Activated T-helper 1 cell treated with anti-CD3 and anti-CD28 coated beads, Interleukin-12 subunit alpha, Interleukin-12 subunit beta, Interleukin-2, Interleukin-4 antibody, amounts not matched to agents 30 ng/mL and 10 ng/mL and 1 ng/mL, durations not matched to agents 14 hours and 24 hours and 36 hours (primary cell): ENCODE measurements at regions of chr1 and their contacts with region 1.

Region 1: GRCh38 chr1:28208818-28209441 is 23.9 kb downstream of the DNAJC8 start:
- DNase-seq: peak; percentile 49
- H3K4me3 Mint-ChIP-seq: no peak overlapping the region
- H3K27ac Mint-ChIP-seq: no peak overlapping the region
- H3K4me1 Mint-ChIP-seq: peaks cover 19% of the 10 kb centered on the region
- H3K27me3 Mint-ChIP-seq: no peaks in the 10 kb centered on the region

Region 2: DNA sequence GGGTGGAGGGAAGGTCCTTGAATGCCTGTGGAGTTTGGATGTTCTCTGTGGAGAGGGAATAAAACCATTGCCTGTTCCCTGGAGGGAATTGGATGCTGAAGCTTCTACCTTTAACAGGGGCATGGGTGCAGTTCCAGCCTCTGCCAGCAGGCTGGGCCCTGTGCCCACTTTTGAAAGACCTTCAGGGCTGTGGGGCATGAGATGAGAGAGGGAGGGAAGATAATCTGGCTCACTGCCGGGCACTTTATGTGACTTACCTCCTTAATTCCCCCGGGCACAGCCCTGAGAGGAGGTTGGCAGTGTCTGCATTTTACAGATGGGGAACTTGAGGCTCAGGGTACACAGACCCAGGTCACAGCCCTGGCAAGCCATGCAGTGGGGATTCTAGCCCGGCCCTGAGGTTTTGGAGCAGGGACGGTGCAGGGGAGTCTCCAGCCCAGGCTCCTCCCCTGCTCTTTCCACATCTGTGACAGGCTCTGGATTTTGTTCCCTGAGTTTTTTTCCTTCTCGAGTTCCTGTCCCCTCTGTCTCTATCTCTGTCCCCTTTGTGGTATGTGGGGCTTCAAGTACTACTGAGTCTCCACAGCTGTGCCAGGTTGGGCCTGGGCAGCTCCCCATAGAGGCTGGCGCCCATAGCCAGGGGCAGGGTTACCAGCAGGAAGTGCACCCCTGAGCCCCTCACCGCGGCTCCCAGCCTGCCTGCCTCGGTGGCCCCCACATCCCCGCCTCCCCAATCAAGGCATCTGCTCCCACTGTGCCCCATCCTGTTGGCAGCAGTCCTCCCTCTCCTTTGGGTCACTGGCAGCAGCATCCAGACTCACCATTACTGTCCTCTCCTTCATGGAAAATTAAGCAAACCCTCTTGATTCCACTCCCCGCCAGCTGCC is 350.6 kb before region 1 on chr1:
- intact Hi-C with region 1: loop called (anchors 2 kb)
- DNase-seq: peak; percentile 72
- H3K4me3 Mint-ChIP-seq: no peak overlapping the region
- H3K27ac Mint-ChIP-seq: no peak overlapping the region
- H3K4me1 Mint-ChIP-seq: peaks cover 27% of the 10 kb centered on the region
- H3K27me3 Mint-ChIP-seq: no peaks in the 10 kb centered on the region

Region 3: GRCh38 chr1:27940297-27940696 is 268.6 kb before region 1 on chr1:
- intact Hi-C with region 1: loop called (anchors 5 kb)
- DNase-seq: peak; percentile 53
- H3K4me3 Mint-ChIP-seq: no peak overlapping the region
- H3K27ac Mint-ChIP-seq: peak overlapping the region; percentile 61
- H3K4me1 Mint-ChIP-seq: peaks cover 50% of the 10 kb centered on the region
- H3K27me3 Mint-ChIP-seq: peaks cover 6% of the 10 kb centered on the region

Region 4: GRCh38 chr1:27992276-27992675 is 216.7 kb before region 1 on chr1:
- intact Hi-C with region 1: loop called (anchors 5 kb)
- DNase-seq: peak; percentile 36
- H3K4me3 Mint-ChIP-seq: peak overlapping the region; percentile 37
- H3K27ac Mint-ChIP-seq: peak overlapping the region; percentile 67
- H3K4me1 Mint-ChIP-seq: peaks cover 50% of the 10 kb centered on the region
- H3K27me3 Mint-ChIP-seq: no peaks in the 10 kb centered on the region